Thyroid gland (tissue), 4 donors: ENCODE measurements at regions of chr1 and their contacts with region 1.

Region 1: DNA sequence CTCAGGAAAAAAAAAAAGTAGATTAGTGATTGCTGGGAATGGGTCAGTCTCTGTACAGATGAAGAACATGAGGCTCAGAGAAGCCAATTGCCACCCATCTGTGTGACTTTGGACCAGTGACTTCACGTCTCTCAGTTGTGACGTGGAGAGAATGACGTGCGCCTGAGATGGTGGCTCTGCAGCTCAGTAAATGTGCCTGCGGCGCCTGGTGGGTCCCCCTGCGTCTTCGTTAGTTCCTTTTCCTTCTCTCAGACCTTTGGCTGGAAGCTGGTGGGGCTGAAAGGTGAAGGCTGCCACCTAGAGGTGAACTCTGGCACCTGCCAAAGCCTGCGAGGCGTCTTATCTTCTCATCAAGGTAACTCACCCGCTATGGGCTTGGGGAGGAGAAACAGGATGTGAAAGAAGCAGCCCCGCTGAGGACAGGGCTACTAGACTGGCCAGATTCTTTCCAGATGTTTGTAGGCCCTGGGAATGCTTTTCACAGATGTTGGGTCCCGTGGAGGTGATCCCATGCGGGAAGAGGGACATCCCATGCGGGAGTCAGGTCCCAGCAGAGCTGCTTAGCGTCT is 8.7 kb upstream of the E2F2 start:
- DNase-seq: peak; percentile 88 to 90
- H3K4me3 ChIP-seq: peak overlapping the region in 1 of 3 donors; percentile 4
- H3K27ac ChIP-seq: no peak overlapping the region
- H3K4me1 ChIP-seq: peaks cover 3 to 19% of the 10 kb centered on the region in 2 donors
- H3K27me3 ChIP-seq: no peaks in the 10 kb centered on the region
- CTCF ChIP-seq: peak; percentile 67 to 95 (median 89)
- POLR2A ChIP-seq: no peak

Region 2: GRCh38 chr1:23422241-23423030 is 117.3 kb before region 1 on chr1:
- intact Hi-C with region 1: loop called (anchors 10 kb)
- DNase-seq: peak; percentile 86 to 88
- H3K4me3 ChIP-seq: peak overlapping the region in 1 of 3 donors; percentile 5
- H3K27ac ChIP-seq: peak overlapping the region; percentile 63 to 90 (median 88)
- H3K4me1 ChIP-seq: peaks cover 24 to 29% of the 10 kb centered on the region in 2 donors
- H3K27me3 ChIP-seq: no peaks in the 10 kb centered on the region
- CTCF ChIP-seq: no peak
- POLR2A ChIP-seq: peak in 1 of 2 donors; percentile 30

Region 3: GRCh38 chr1:23496490-23497181 is 43.1 kb before region 1 on chr1:
- intact Hi-C with region 1: loop called (anchors 5 kb)
- DNase-seq: no peak
- H3K4me3 ChIP-seq: no peak overlapping the region
- H3K27ac ChIP-seq: no peak overlapping the region
- H3K4me1 ChIP-seq: peaks cover 0 to 6% of the 10 kb centered on the region in 2 donors
- H3K27me3 ChIP-seq: no peaks in the 10 kb centered on the region
- CTCF ChIP-seq: no peak
- POLR2A ChIP-seq: no peak

Region 4: GRCh38 chr1:23636009-23636408 is 96.2 kb after region 1 on chr1:
- intact Hi-C with region 1: loop called (anchors 2 kb)
- DNase-seq: no peak
- H3K4me3 ChIP-seq: no peak overlapping the region
- H3K27ac ChIP-seq: peak overlapping the region in 1 of 3 donors; percentile 86
- H3K4me1 ChIP-seq: peaks cover 11 to 47% of the 10 kb centered on the region in 2 donors
- H3K27me3 ChIP-seq: no peaks in the 10 kb centered on the region
- CTCF ChIP-seq: no peak
- POLR2A ChIP-seq: no peak